ENCODE measurements at regions of chr4 and their contacts with region 1.

Region 1: DNA sequence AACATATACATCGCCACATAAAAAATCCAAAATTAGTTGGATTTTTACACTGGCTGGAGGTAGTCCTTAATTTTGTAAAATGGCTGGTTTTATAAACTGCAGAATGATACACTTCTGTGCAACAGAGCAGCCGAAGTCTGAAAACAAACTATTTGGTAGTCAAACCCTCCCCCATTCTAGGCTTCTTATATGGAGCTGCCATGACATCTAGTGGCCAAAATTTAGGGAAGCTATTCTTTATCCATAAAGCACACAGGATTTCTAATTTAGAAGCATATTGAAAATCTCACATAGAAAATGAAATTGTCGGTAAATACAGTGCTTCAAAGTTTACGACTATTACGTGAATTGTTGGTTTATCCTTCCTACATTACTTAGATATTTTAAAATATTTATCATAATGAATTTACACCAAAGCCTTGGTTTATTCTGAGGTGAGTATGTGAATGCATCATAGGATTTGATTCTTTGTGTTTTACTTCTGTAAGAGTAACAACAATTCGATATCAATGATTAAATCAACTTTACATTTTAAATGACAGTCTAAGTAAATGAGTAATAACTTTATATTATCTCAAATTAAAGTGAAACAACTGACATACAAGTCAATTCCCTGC is 113.4 kb upstream of the FAM241A start:
- DNase-seq: peak; percentile 51
- H3K4me3 ChIP-seq: no peak overlapping the region
- H3K27ac ChIP-seq: no peak overlapping the region
- H3K4me1 ChIP-seq: no peaks in the 10 kb centered on the region
- H3K27me3 ChIP-seq: peaks cover 12 to 36% of the 10 kb centered on the region in 2 experiments
- CTCF ChIP-seq: peak; percentile 39 to 43
- POLR2A ChIP-seq: no peak

Region 2: GRCh38 chr4:110516106-110516922 is 1515.5 kb before region 1 on chr4:
- CTCF ChIA-PET with region 1: interaction called, 7 read pairs
- POLR2A ChIA-PET with region 1: no interaction called
- dilution Hi-C with region 1: no loop called
- intact Hi-C with region 1: loop called (anchors 10 kb)
- DNase-seq: peak; percentile 86
- H3K4me3 ChIP-seq: peak overlapping the region; percentile 56 to 95 (median 79)
- H3K27ac ChIP-seq: peak overlapping the region; percentile 49
- H3K4me1 ChIP-seq: peaks cover 10% of the 10 kb centered on the region
- H3K27me3 ChIP-seq: peaks cover 0 to 4% of the 10 kb centered on the region in 2 experiments
- CTCF ChIP-seq: peak; percentile 80 to 82
- POLR2A ChIP-seq: no peak

Region 3: DNA sequence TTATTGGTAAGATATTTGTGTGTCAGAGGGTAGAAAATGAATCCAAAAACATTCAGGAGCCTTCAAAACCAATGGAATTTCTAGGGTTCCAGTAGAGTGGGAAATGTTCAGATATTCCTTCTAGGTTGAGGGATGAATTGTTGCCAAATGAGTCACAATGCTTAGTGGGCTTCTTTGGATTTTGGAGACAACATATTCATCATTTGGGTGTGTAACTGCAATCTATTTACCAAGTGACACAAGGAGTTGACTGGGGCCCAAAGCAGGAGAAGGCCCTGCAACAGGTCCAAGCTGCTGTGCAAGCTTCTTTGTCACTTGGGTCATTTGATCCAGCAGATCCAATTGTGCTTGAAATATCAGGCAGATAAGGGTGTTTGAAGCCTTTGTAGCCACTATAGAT is 857.5 kb before region 1 on chr4:
- CTCF ChIA-PET with region 1: no interaction called
- POLR2A ChIA-PET with region 1: no interaction called
- dilution Hi-C with region 1: no loop called
- intact Hi-C with region 1: loop called (anchors 10 kb)
- DNase-seq: no peak
- H3K4me3 ChIP-seq: no peak overlapping the region
- H3K27ac ChIP-seq: no peak overlapping the region
- H3K4me1 ChIP-seq: no peaks in the 10 kb centered on the region
- H3K27me3 ChIP-seq: no peaks in the 10 kb centered on the region
- CTCF ChIP-seq: no peak
- POLR2A ChIP-seq: no peak

Region 4: GRCh38 chr4:111631215-111631999 is 400.4 kb before region 1 on chr4:
- CTCF ChIA-PET with region 1: interaction called, 26 read pairs
- POLR2A ChIA-PET with region 1: no interaction called
- dilution Hi-C with region 1: no loop called
- intact Hi-C with region 1: no loop called
- DNase-seq: peak; percentile 27
- H3K4me3 ChIP-seq: no peak overlapping the region
- H3K27ac ChIP-seq: no peak overlapping the region
- H3K4me1 ChIP-seq: no peaks in the 10 kb centered on the region
- H3K27me3 ChIP-seq: peaks cover 0 to 8% of the 10 kb centered on the region in 2 experiments
- CTCF ChIP-seq: peak; percentile 24 to 48
- POLR2A ChIP-seq: no peak

Region 5: DNA sequence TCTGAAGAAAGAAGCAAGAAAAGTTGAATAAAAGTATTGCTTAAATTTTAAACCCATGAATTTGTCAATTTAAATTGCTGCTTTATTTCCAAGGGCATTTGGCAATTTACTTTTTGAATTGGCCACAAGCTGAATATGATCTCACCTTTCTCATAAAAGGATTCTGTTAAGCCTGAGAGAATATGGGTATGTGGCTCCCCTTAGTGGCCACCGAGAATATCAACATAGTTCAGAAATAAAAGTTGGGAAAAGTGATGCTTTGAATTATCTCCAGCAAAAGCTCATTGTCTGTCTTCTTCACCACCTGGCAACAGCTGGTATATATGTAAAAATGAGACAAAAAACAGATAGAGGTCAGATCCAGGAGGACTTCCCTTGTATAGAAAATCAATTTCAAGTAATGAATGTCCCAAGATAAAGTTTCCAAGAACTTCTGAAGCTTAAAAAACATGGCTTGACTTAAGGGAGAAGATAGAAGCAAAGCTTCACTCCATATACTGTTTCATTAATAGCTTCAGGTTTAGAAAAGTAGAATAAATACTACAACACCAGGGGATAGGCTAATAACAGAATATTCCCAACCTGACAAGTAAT is 177.2 kb before region 1 on chr4:
- CTCF ChIA-PET with region 1: interaction called, 69 read pairs
- POLR2A ChIA-PET with region 1: no interaction called
- dilution Hi-C with region 1: no loop called
- intact Hi-C with region 1: loop called (anchors 1 kb)
- DNase-seq: peak; percentile 39
- H3K4me3 ChIP-seq: no peak overlapping the region
- H3K27ac ChIP-seq: no peak overlapping the region
- H3K4me1 ChIP-seq: no peaks in the 10 kb centered on the region
- H3K27me3 ChIP-seq: peaks cover 0 to 8% of the 10 kb centered on the region in 2 experiments
- CTCF ChIP-seq: peak; percentile 34 to 49
- POLR2A ChIP-seq: no peak

Region 6: GRCh38 chr4:112007391-112007790 is 24.4 kb before region 1 on chr4:
- CTCF ChIA-PET with region 1: interaction called, 15 read pairs
- POLR2A ChIA-PET with region 1: no interaction called
- dilution Hi-C with region 1: no loop called
- intact Hi-C with region 1: no loop called
- DNase-seq: no peak
- H3K4me3 ChIP-seq: no peak overlapping the region
- H3K27ac ChIP-seq: no peak overlapping the region
- H3K4me1 ChIP-seq: no peaks in the 10 kb centered on the region
- H3K27me3 ChIP-seq: peaks cover 0 to 4% of the 10 kb centered on the region in 2 experiments
- CTCF ChIP-seq: no peak
- POLR2A ChIP-seq: no peak